ENCODE measurements at regions of chr13 and their contacts with region 1.

Region 1: GRCh38 chr13:51063909-51064308 is 47.2 kb downstream of the C13orf42 start:
- DNase-seq: no peak
- ATAC-seq: no peak
- H3K4me3 ChIP-seq: no peak overlapping the region
- H3K4me3 Mint-ChIP-seq: no peak overlapping the region
- H3K27ac ChIP-seq: no peak overlapping the region
- H3K27ac Mint-ChIP-seq: no peak overlapping the region
- H3K4me1 ChIP-seq: peaks cover 3% of the 10 kb centered on the region
- H3K4me1 Mint-ChIP-seq: no peaks in the 10 kb centered on the region
- H3K27me3 ChIP-seq: peaks cover 6 to 18% of the 10 kb centered on the region in 2 experiments
- H3K27me3 Mint-ChIP-seq: peaks cover 32% of the 10 kb centered on the region
- CTCF ChIP-seq: no peak

Region 2: GRCh38 chr13:50457415-50458393 is 606.2 kb before region 1 on chr13:
- CTCF ChIA-PET with region 1: no interaction called
- POLR2A ChIA-PET with region 1: no interaction called
- intact Hi-C with region 1: no loop called
- DNase-seq: peak in 2 of 14 experiments; percentile 13 to 42
- ATAC-seq: no peak
- H3K4me3 ChIP-seq: no peak overlapping the region
- H3K4me3 Mint-ChIP-seq: no peak overlapping the region
- H3K27ac ChIP-seq: no peak overlapping the region
- H3K27ac Mint-ChIP-seq: no peak overlapping the region
- H3K4me1 ChIP-seq: no peaks in the 10 kb centered on the region
- H3K4me1 Mint-ChIP-seq: no peaks in the 10 kb centered on the region
- H3K27me3 ChIP-seq: no peaks in the 10 kb centered on the region
- H3K27me3 Mint-ChIP-seq: no peaks in the 10 kb centered on the region
- CTCF ChIP-seq: no peak

Region 3: GRCh38 chr13:50951366-50951765 is 112.5 kb before region 1 on chr13:
- CTCF ChIA-PET with region 1: no interaction called
- POLR2A ChIA-PET with region 1: no interaction called
- intact Hi-C with region 1: no loop called
- DNase-seq: no peak
- ATAC-seq: no peak
- H3K4me3 ChIP-seq: no peak overlapping the region
- H3K4me3 Mint-ChIP-seq: no peak overlapping the region
- H3K27ac ChIP-seq: no peak overlapping the region
- H3K27ac Mint-ChIP-seq: no peak overlapping the region
- H3K4me1 ChIP-seq: no peaks in the 10 kb centered on the region
- H3K4me1 Mint-ChIP-seq: peaks cover 6% of the 10 kb centered on the region
- H3K27me3 ChIP-seq: no peaks in the 10 kb centered on the region
- H3K27me3 Mint-ChIP-seq: no peaks in the 10 kb centered on the region
- CTCF ChIP-seq: no peak

Region 4: DNA sequence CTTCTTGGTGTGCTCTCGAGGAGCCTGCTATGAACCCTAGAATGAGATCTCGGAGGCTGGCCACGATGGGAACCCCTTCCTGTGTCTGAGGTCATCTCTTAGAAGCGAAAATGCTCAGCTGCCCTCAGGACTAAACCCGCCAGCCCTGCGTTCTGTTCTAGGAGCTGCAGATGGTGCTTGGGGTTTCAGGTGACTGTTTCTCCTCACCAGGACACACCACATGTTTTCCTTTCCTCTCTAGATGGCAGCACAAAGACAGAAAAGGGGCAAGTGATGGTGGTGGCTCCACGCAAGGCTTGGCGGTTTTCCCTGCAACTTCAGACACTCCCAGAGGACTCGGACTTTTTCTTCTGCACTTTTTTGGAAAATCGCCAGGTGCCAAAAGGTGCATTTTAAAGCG is 94.2 kb before region 1 on chr13:
- CTCF ChIA-PET with region 1: no interaction called
- POLR2A ChIA-PET with region 1: no interaction called
- intact Hi-C with region 1: no loop called
- DNase-seq: no peak
- ATAC-seq: no peak
- H3K4me3 ChIP-seq: no peak overlapping the region
- H3K4me3 Mint-ChIP-seq: no peak overlapping the region
- H3K27ac ChIP-seq: no peak overlapping the region
- H3K27ac Mint-ChIP-seq: no peak overlapping the region
- H3K4me1 ChIP-seq: no peaks in the 10 kb centered on the region
- H3K4me1 Mint-ChIP-seq: no peaks in the 10 kb centered on the region
- H3K27me3 ChIP-seq: no peaks in the 10 kb centered on the region
- H3K27me3 Mint-ChIP-seq: no peaks in the 10 kb centered on the region
- CTCF ChIP-seq: no peak

Region 5: DNA sequence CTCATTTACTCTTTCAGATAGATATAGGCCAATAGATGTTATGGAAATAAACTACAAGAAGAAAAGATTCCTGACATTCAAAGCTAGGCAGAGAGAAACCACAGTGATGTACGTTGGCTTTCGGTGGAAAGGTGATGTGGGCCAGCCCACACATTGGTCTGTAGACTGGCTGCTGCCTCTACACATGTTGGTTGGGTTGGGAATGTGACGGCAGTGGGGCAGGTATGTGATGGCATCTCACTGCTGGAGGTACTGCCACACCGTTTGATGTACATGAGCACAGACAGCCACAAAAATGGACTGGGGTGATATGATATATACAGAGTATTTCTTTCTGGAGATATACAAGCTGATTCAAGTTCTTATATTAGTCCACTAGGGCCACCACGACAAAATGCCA is 22.2 kb before region 1 on chr13:
- CTCF ChIA-PET with region 1: no interaction called
- POLR2A ChIA-PET with region 1: no interaction called
- intact Hi-C with region 1: loop called in 1 of 2 experiments (anchors 1 kb)
- DNase-seq: no peak
- ATAC-seq: no peak
- H3K4me3 ChIP-seq: no peak overlapping the region
- H3K4me3 Mint-ChIP-seq: no peak overlapping the region
- H3K27ac ChIP-seq: no peak overlapping the region
- H3K27ac Mint-ChIP-seq: no peak overlapping the region
- H3K4me1 ChIP-seq: no peaks in the 10 kb centered on the region
- H3K4me1 Mint-ChIP-seq: no peaks in the 10 kb centered on the region
- H3K27me3 ChIP-seq: no peaks in the 10 kb centered on the region
- H3K27me3 Mint-ChIP-seq: no peaks in the 10 kb centered on the region
- CTCF ChIP-seq: no peak

Measured in CD4-positive, alpha-beta T cell (primary cell).